Activated CD8-positive, alpha-beta T cell treated with anti-CD3 and anti-CD28 coated beads, Interleukin-2, amount 10 ng/mL, durations not matched to agents 7 days and 5 days (primary cell): ENCODE measurements at regions of chr12 and their contacts with region 1.

Region 1: GRCh38 chr12:50038336-50038735 is 13.0 kb upstream of the RACGAP1 start:
- DNase-seq: no peak
- ATAC-seq: no peak
- H3K4me3 Mint-ChIP-seq: no peak overlapping the region
- H3K27ac Mint-ChIP-seq: no peak overlapping the region
- H3K4me1 Mint-ChIP-seq: peaks cover 4% of the 10 kb centered on the region
- H3K27me3 Mint-ChIP-seq: peaks cover 10% of the 10 kb centered on the region

Region 2: DNA sequence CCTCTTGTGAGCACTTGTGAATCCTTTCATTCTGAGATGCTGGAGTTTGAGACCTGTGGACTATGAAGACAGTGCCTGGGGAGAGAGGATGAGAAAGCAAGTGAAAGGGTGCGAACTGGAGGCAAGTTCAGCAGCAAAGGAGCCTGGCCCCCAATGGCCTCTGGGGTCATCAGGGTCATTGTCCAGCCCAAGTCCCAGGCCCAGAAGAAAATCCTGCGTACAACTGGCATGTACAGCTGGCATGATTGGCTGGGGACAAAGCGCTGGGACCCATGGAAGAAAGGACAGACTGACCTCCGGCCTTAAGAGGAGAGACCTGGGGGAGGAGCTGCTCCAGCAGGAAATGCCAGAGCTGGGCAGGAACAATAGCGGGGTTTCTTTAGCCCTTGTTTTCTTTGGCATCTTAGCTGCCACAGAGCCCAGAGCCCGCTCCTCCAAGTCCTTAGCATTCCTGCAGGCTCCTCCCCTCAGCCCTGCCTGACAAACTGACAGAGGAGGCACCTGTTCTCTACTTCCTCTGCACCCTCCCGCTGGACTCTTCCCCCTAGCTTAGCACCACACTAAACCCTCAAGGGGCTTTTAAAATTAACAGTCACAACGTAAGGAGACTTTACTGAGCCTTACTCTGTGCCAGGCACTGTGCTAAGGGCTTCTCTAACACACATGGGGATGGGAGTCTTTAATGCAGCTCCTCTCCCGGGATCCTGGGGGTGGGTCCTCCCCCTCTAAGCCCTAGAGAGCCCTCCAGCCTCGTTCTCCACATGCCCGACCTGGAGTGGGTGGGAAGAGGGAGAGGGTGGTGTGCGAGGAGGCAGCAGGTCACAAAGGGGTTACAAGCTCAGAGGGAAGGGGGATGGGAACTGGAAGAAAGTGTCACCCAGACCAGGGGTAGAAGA is 78.5 kb before region 1 on chr12:
- CTCF ChIA-PET with region 1: no interaction called
- POLR2A ChIA-PET with region 1: no interaction called
- DNase-seq: no peak
- ATAC-seq: no peak
- H3K4me3 Mint-ChIP-seq: no peak overlapping the region
- H3K27ac Mint-ChIP-seq: no peak overlapping the region
- H3K4me1 Mint-ChIP-seq: peaks cover 10% of the 10 kb centered on the region
- H3K27me3 Mint-ChIP-seq: peaks cover 79% of the 10 kb centered on the region

Region 3: GRCh38 chr12:50006789-50007436 is 31.4 kb before region 1 on chr12:
- CTCF ChIA-PET with region 1: interaction called, 11 read pairs
- POLR2A ChIA-PET with region 1: no interaction called
- DNase-seq: no peak
- ATAC-seq: no peak
- H3K4me3 Mint-ChIP-seq: no peak overlapping the region
- H3K27ac Mint-ChIP-seq: no peak overlapping the region
- H3K4me1 Mint-ChIP-seq: peaks cover 7% of the 10 kb centered on the region
- H3K27me3 Mint-ChIP-seq: no peaks in the 10 kb centered on the region

Region 4: GRCh38 chr12:50025187-50026059 is 12.9 kb before region 1 on chr12 and contains the start of gene RACGAP1:
- CTCF ChIA-PET with region 1: interaction called, 28 read pairs
- POLR2A ChIA-PET with region 1: interaction called, 3 read pairs
- DNase-seq: peak; percentile 98
- ATAC-seq: peak; percentile 98
- H3K4me3 Mint-ChIP-seq: peak within 1 kb of the TSS; percentile 94
- H3K27ac Mint-ChIP-seq: peak within 1 kb of the TSS; percentile 98
- H3K4me1 Mint-ChIP-seq: peaks cover 39% of the 10 kb centered on the region
- H3K27me3 Mint-ChIP-seq: no peaks in the 10 kb centered on the region
- total RNA-seq, gene RACGAP1: 185 to 200 TPM

Region 5: DNA sequence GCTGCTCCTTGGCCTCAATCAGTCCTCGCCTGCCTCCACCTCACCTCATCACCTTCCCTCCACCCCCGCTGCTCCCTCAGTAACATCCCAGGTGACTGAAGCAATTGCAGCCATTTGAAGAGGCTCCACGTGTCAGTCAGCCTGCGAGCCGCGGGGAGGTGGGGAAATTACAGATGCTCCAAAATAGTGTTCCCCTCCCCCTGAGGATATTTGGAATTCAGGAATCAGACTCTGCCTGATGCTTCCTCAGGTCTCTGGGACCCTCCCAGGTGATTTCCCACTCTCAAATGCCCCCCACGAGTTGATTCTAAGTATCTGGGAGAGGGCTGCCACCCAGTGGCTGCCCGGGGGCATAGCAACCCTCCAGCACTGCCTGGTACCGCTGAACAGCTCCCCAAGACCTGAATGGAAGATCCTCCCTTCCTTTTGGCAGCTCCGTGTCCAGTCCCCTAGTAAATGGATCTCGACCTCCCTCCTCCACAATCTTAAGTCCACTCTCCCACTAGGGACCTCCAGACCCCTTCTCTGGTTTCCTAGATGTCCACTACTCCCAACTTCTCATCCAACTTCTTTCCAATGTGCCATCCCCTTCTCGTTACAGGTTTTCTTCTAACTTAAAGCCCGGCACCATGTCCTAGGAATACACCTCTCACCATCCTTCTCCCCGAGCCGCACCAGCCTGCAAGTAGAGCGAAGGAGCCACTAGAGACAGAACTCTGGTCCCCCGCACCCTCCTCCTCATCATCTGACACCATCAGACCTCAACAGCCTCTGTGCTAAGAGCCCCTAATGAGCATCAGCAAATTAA is 17.7 kb after region 1 on chr12:
- CTCF ChIA-PET with region 1: interaction called, 100 read pairs
- POLR2A ChIA-PET with region 1: interaction called, 3 read pairs
- DNase-seq: peak; percentile 72
- ATAC-seq: peak; percentile 20
- H3K4me3 Mint-ChIP-seq: peak overlapping the region; percentile 41
- H3K27ac Mint-ChIP-seq: no peak overlapping the region
- H3K4me1 Mint-ChIP-seq: peaks cover 45% of the 10 kb centered on the region
- H3K27me3 Mint-ChIP-seq: peaks cover 34% of the 10 kb centered on the region

Region 6: GRCh38 chr12:50084775-50085614 is 46.7 kb after region 1 on chr12 and contains the start of gene SMARCD1:
- CTCF ChIA-PET with region 1: interaction called, 10 read pairs
- POLR2A ChIA-PET with region 1: no interaction called
- DNase-seq: peak; percentile 86
- ATAC-seq: peak; percentile 90
- H3K4me3 Mint-ChIP-seq: peak within 1 kb of the TSS; percentile 90
- H3K27ac Mint-ChIP-seq: peak within 1 kb of the TSS; percentile 94
- H3K4me1 Mint-ChIP-seq: peaks cover 29% of the 10 kb centered on the region
- H3K27me3 Mint-ChIP-seq: no peaks in the 10 kb centered on the region
- total RNA-seq, gene SMARCD1: 72.3 to 78.1 TPM

Region 7: DNA sequence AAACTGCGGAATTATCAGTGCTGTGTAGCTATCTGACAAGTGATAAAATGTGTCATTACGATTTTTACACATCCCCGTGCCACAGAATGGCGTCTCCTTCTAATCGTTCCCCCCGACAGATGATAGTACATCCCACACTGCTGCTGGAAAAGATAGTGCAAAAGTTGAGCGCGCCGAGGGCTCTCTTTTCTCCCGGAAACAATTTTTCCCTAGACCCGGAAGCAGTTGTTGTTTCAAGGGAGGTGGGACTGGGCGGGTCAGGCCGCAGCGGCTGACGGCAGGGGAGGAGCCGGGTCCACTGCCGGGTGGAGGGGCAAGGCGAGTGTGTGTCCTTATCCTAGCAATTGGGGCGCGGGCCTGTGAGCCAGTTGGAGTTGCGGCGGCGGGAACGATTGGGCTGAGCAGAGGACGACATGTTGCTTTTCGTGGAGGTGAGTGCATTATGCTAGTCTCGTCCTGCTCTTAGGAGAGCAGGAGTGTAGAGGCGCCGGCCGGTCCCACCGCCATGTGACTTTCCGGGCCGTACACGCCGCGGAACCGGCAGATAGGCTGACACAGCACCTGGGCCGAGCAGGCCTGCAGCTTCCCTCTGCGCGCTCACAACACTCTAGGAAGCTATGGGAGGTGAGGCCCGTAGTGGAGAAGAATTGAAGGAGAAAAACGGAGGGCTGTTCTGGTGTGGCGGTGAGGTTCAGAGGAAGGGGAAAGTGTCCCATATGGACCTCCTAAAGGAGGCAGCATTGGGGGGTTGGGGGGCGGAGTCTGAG is 362.4 kb after region 1 on chr12 and contains the start of gene LARP4:
- CTCF ChIA-PET with region 1: no interaction called
- POLR2A ChIA-PET with region 1: no interaction called
- DNase-seq: peak; percentile 95
- ATAC-seq: peak; percentile 97
- H3K4me3 Mint-ChIP-seq: peak within 1 kb of the TSS; percentile 95
- H3K27ac Mint-ChIP-seq: peak within 1 kb of the TSS; percentile 91
- H3K4me1 Mint-ChIP-seq: peaks cover 23% of the 10 kb centered on the region
- H3K27me3 Mint-ChIP-seq: peaks cover 3% of the 10 kb centered on the region
- total RNA-seq, gene LARP4: 59.2 to 60.1 TPM